ENCODE measurements at regions of chr2 and their contacts with region 1.

Region 1: GRCh38 chr2:222242532-222242931 is 56.3 kb downstream of the PAX3 start:
- DNase-seq: no peak
- H3K4me3 ChIP-seq: no peak overlapping the region
- CTCF ChIP-seq: no peak
- POLR2A ChIP-seq: no peak

Region 2: DNA sequence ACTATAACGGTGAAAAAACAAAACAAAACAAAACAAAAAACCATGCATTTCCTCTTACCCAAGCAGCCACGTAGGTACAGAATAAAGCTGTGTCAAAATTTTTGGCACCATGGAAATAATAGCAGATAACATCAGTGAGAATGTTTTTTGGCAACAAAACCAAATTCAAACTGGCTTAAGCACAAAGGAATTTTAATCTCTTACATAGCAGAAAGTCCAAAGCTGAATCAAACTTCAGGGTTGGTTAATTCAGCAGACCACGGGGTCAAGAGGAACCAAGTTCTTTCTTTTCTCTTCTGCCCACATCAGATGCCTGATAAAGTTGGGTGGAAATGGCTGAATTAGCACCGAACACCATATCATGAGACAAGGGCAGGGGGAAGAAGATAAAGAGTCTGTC is 73.2 kb before region 1 on chr2:
- intact Hi-C with region 1: no loop called
- DNase-seq: no peak
- H3K4me3 ChIP-seq: no peak overlapping the region
- CTCF ChIP-seq: no peak
- POLR2A ChIP-seq: no peak

Region 3: DNA sequence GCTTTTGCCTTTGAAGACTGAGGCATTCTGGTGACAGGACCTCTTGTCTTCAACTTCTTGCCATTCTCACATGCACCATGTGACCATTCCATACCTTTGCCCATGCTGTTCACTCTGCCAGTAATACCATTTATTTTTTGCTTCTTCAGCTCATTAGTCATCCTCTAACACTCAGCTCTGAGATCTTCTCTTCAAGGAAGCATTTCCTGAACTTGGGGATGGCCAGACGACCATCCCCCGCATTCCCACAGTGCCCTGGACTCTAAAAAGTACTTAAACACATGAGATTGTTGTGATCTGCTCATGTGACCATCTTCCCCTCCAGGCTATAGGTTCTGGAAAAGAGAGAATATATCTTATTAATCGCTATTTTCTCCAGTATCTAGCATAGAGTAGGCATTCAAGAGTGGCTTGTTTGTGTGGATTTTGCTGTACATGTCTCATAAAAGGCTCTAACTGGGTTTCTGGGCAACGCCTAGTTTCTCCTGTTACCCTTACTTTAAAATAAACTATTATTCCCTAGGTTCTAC is 22.3 kb after region 1 on chr2:
- intact Hi-C with region 1: loop called (anchors 1 kb)
- DNase-seq: no peak
- H3K4me3 ChIP-seq: no peak overlapping the region
- CTCF ChIP-seq: no peak
- POLR2A ChIP-seq: no peak